ENCODE measurements at regions of chr9 and their contacts with region 1.

Region 1: GRCh38 chr9:21234153-21234687 is 5.6 kb downstream of the IFNA14 start:
- H3K4me3 ChIP-seq: no peak overlapping the region
- H3K27ac ChIP-seq: no peak overlapping the region
- H3K4me1 ChIP-seq: no peaks in the 10 kb centered on the region
- CTCF ChIP-seq: no peak

Region 2: GRCh38 chr9:21434202-21435014 is 200.2 kb after region 1 on chr9:
- CTCF ChIA-PET with region 1: interaction called, 10 read pairs
- POLR2A ChIA-PET with region 1: no interaction called
- H3K4me3 ChIP-seq: no peak overlapping the region
- H3K27ac ChIP-seq: no peak overlapping the region
- H3K4me1 ChIP-seq: no peaks in the 10 kb centered on the region
- CTCF ChIP-seq: no peak